ENCODE measurements at regions of chr21 and their contacts with region 1.

Region 1: DNA sequence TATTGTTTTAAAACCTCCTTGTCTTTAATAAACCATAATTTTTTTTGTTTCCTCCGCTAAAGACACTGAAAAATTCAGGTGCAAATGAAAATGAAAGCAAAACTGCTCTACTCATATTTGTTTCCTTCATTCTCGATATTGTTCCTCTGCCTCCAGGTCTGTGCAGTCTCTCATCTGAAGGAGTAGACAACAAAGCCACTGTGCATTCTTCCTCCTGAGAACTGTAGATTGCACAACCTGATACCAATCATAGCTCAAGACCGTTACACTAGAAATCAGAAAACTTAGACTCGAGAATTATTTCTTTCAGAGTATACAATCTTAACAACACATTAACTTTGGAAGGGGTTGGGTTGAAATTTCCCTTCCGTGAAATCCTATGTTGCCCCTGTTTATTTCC is 373.1 kb upstream of the CXADR start:
- DNase-seq: no peak

Region 2: DNA sequence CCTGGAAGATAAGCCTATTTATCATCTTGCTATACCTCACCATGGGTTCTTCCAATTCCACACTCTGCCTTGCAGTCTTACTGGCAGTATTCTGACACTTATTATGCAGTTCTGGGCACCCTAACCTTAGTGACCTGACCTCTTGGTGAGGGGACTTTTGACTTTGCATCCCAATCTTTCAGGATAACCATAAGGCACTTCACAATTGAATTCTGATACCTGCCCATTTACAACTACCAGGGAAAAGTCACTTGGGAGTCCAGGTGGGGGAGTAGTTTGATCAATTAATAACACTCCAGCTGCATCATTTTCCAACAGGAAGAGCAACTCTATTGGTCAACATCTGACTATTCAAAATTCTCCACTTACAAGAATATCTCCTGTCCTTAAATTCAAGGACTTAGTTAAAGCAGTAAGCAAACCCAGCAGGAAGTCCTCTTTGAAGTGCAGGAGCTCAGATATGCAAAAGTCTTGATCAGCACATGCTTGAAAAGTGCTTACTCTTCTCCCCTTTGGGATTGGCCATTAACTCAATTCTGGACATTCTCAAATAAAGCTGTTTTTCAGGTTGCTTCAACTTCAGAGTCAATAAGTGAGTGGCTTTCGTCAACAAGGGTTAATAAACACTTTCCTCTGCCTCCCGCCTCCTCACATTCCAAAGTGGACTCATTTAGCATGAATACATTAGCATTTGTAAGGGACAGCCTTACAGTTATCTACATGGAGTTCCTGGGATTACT is 1897.6 kb before region 1 on chr21:
- intact Hi-C with region 1: no loop called
- DNase-seq: no peak

Region 3: DNA sequence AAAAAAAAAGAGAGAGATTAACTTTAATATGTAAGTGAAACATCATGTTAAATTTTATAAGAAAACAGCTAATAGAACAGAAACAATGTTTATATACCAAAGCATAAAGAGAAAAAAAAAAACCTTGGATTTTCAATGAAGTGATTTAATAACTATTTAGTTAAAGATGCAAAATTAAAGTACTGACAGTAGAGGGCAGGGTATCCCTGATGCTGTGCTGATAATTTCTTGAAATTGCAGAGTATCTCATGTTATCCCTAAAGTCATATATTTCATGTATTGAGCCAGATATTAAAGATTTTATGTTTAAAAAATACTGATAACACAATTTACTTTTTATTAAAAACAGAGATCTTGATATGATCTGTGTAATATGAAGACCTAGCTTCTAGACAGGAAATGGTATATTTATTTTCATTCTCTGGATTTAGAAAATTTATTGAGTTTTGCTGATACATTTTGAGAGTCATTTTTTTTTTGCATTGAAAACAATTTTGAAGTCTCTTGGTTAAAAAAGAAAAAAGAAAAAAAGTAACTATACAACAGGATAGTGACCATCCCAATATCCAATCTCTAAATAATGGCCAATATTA is 1136.8 kb before region 1 on chr21:
- intact Hi-C with region 1: loop called in 1 of 2 experiments (anchors 5 kb)
- DNase-seq: no peak

Region 4: DNA sequence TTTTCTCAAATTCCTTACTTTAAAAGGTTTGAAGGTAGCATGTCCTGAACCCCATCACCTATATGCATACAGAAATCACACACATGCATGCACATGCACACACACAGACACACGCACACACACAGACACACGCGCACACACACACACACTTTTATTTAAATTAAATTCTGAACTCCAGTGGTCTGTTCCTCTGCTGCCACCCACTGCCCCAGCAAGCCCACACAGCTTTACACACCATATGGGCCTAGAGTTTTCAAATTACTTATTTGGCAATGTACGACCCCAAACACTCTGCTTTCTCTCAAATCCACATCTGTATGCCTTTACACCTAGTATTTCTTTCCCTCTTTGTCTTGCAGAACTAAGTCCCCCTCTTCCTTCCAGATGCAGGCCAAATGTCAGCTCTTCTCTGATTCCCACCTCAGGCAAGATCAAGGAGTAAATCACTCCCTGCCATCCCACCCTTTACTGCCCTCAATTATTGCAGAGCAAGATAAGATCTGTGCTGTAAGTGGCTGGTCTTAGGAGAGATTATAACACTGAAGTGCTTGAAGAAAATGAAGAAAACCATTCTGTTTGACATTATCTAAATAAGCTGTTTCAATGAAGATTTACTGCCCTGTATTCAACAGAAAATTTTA is 56.8 kb before region 1 on chr21:
- intact Hi-C with region 1: no loop called
- DNase-seq: no peak

Region 5: GRCh38 chr21:18298228-18298627 is 1158.5 kb after region 1 on chr21:
- intact Hi-C with region 1: no loop called
- DNase-seq: no peak

Measured in posterior vena cava (tissue), 2 donors.